Heart left ventricle (tissue), 16 donors: ENCODE measurements at regions of chr15 and their contacts with region 1.

Region 1: GRCh38 chr15:78506971-78507830 is at the start of gene HYKK:
- DNase-seq: peak; percentile 91 to 93 (median 91)
- ATAC-seq: peak; percentile 97 to 98 (median 98)
- H3K4me3 ChIP-seq: peak within 1 kb of the TSS; percentile 64 to 95 (median 84)
- H3K27ac ChIP-seq: peak within 1 kb of the TSS in 10 of 12 donors; percentile 7 to 76 (median 67)
- H3K4me1 ChIP-seq: peaks cover 0 to 16% (median 7%) of the 10 kb centered on the region in 12 donors
- H3K27me3 ChIP-seq: peaks cover 0 to 9% (median 0%) of the 10 kb centered on the region in 9 donors
- CTCF ChIP-seq: peak in 4 of 12 donors; percentile 11 to 22 (median 20)
- POLR2A ChIP-seq: peak in 1 of 2 donors; percentile 45
- total RNA-seq, gene HYKK: 4.1 to 8.7 (median 6.8) TPM

Region 2: DNA sequence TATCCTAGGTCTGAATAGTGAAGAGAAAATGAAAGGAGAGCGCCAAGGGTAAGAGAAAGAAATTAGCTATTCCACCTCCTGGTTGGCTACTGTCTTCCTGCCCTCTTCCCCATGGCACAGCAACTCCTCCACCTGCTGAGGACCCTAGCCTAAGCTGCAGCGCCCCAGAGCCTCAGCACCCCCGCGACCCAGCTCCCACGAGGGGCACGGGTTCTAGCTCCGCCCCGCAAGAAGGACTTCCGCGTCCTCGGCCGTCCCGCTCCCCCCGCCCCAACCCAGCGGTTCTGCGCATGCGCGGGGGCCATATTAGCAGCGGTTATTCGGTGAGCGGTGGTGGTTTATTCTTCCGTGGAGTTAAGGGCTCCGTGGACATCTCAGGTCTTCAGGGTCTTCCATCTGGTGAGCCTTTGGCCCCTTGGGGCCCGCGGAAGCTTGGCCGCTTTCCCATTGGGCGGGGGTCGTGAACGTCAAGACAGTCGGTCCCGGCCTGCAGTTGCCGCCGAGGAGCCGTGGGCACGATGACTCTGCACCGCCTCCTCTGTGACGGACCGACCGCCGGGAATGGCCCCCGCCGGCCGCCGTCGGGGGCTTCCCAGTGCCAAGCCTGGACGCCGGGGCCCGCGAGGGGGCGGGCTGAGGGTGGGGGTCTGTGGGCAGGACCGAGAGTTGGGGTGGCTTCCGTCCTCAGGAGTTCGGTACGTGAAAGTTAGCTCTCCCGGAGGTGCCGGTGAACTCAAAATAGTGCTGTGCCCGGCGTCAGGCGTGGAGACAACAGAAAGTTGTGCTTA is 33.1 kb after region 1 on chr15 and contains the start of gene PSMA4:
- intact Hi-C with region 1: loop called in 1 of 10 experiments (anchors 1 kb)
- DNase-seq: peak; percentile 93 to 97 (median 94)
- ATAC-seq: peak; percentile 86 to 96 (median 94)
- H3K4me3 ChIP-seq: peak within 1 kb of the TSS; percentile 61 to 95 (median 83)
- H3K27ac ChIP-seq: peak within 1 kb of the TSS; percentile 87 to 99 (median 98)
- H3K4me1 ChIP-seq: peaks cover 0 to 40% (median 21%) of the 10 kb centered on the region in 12 donors
- H3K27me3 ChIP-seq: no peaks in the 10 kb centered on the region
- CTCF ChIP-seq: peak in 10 of 12 donors; percentile 23 to 65 (median 46)
- POLR2A ChIP-seq: peak in 1 of 2 donors; percentile 85
- total RNA-seq, gene PSMA4: 97.2 to 153 (median 115) TPM